Right ventricle myocardium inferior (tissue), 1 donor: ENCODE measurements at regions of chr7 and their contacts with region 1.

Region 1: DNA sequence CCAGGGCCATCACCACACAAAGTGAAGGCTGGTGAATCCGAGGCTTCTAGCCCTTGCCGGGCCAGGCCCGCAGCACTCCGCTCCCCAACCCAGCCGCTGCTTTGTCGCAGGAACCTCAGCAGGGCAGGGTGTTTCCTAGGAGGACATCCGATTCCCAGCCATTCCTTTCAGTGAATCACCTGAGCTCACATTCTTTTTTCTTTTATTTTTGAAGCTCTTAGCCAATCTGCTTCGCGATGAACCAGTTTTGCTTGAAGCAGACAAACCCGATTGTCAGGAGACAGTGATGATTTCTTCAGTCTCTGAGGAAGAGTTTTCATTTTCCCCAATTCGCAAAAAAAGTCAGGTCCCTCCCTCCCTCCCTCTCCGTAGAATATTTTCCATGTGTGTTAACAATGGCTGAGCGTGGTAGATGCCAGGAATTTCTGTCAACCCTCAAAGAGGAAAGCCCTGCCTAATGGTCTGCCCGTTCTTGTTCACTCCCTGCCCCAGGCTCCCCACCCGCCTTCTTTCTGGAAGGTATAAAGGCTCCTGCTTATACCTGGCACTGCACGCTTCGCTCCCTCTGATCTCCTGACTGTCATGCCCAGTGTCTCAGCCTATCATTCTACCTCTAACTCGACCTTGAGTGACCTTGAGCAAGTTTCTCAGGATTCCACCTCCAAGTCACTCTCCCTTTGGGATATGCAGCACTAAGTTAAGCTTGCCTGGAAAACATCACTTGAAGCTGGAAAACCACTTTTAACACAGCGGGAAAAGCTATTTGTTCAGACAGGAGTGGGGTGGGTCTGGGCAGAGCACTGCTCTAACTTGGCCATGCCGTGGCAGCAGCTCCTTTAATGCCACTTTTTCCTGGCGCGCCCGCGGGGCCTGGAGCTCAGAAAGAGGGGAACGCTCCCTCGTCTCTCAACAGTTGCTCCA is 35.1 kb downstream of the EGFR start:
- DNase-seq: no peak
- ATAC-seq: no peak

Region 2: DNA sequence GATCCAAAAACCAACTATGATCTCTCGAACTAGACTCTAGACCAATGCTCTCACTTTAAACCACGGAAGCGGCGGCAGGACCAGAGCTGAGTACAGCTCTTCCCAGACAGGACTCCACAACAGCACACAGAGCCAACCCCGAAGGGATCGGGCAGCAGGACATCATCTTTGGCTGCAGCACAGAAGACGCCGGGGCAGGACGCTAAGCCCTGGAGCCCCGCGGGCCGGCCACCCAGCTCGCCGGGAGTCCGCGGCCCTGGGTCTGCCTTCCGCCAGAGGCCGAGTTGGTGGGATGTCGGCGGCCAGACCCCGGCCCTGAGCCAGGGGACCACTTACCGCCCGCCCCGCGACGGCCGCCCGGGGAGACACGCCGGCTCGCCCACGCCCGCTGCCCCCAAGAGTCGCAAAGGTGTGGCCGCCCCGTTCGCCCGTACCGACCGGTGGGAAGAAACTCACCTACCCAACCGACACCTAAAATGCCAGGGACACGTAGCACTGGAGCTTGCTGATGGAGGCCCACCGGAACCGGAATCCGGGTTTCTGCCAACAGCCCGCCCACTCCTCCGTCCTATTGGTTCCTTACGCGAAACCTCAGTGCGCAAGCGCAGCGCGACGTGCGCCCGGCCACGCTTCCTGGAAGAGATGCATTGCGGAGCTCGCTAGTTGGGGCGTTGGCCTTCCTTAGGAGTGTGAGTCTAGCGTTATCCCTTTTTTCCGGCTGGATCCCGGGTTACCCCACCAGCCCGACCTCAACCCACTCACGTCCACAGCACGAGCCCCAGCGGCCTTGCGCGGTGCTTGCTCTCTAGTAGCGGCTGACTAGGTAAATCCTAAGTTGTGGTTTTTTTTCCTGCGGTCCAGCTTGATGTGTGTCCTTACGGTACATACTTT is 295.0 kb before region 1 on chr7 and contains the start of gene SEC61G:
- intact Hi-C with region 1: no loop called
- DNase-seq: peak; percentile 98
- ATAC-seq: peak; percentile 99
- total RNA-seq, gene SEC61G: 103 TPM

Region 3: GRCh38 chr7:55034776-55035175 is 19.1 kb before region 1 on chr7:
- intact Hi-C with region 1: loop called (anchors 2 kb)
- DNase-seq: no peak
- ATAC-seq: no peak